H1 (cell line): ENCODE measurements at regions of chr2 and their contacts with region 1.

Region 1: GRCh38 chr2:41698678-41699422 is 349.0 kb upstream of the PKDCC start:
- DNase-seq: peak; percentile 21 to 83
- H3K4me3 ChIP-seq: no peak overlapping the region
- H3K27ac ChIP-seq: no peak overlapping the region
- H3K4me1 ChIP-seq: peaks cover 0 to 2% (median 0%) of the 10 kb centered on the region in 4 experiments; a peak in 1 of 7 replicates
- H3K27me3 ChIP-seq: no peaks in the 10 kb centered on the region
- CTCF ChIP-seq: peak; percentile 77 to 95 (median 89)
- EP300 ChIP-seq: no peak
- POLR2A ChIP-seq: no peak
- RAD21 ChIP-seq: peak; percentile 89 to 93

Region 2: DNA sequence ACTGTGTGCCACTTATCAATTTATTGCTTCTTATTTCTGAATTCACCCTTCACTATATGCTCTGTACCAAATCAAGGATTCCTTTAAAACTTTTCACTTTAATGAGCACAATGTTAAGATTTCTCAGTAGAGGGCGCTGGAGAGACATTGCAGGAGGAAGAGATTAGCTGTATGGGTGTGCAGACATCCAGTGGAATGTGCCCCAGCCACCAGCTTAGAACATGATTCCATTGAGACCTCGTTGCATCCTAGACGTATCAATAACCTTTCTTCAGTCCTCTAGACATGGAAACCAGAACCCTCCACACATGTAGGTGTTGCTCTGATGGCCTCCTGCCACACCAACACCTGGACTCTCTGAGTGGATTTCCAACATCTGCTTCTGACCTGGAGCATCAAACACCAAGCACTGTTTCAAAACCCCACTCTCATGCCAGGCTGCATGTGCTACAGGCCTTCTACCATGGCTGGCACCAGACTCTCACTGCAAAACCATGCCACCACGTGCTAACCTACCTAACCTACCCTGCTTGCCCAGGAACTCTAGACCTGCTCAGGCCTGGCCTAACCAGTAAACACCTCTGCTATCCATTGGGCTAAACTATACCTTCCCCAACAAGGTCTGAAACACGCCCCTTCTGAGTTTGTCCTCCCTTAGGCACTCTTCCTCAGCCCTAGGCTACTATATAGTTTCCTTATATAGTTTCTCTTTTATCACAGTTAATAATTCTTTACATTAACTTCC is 284.2 kb before region 1 on chr2:
- CTCF ChIA-PET with region 1: interaction called, 115 read pairs
- POLR2A ChIA-PET with region 1: no interaction called
- DNase-seq: peak; percentile 1 to 49
- H3K4me3 ChIP-seq: no peak overlapping the region
- H3K27ac ChIP-seq: no peak overlapping the region
- H3K4me1 ChIP-seq: no peaks in the 10 kb centered on the region; a peak in 1 of 7 replicates
- H3K27me3 ChIP-seq: peaks cover 0 to 1% (median 0%) of the 10 kb centered on the region in 4 experiments; a peak in 1 of 7 replicates
- CTCF ChIP-seq: peak; percentile 14 to 77 (median 67)
- EP300 ChIP-seq: no peak
- POLR2A ChIP-seq: no peak
- RAD21 ChIP-seq: peak; percentile 87 to 91

Region 3: GRCh38 chr2:41441627-41442357 is 257.1 kb before region 1 on chr2:
- CTCF ChIA-PET with region 1: interaction called, 26 read pairs
- POLR2A ChIA-PET with region 1: no interaction called
- DNase-seq: no peak
- H3K4me3 ChIP-seq: no peak overlapping the region
- H3K27ac ChIP-seq: no peak overlapping the region
- H3K4me1 ChIP-seq: no peaks in the 10 kb centered on the region
- H3K27me3 ChIP-seq: no peaks in the 10 kb centered on the region
- CTCF ChIP-seq: peak in 1 of 3 experiments; percentile 16; a peak in 1 of 4 replicates
- EP300 ChIP-seq: no peak
- POLR2A ChIP-seq: no peak
- RAD21 ChIP-seq: no peak

Region 4: DNA sequence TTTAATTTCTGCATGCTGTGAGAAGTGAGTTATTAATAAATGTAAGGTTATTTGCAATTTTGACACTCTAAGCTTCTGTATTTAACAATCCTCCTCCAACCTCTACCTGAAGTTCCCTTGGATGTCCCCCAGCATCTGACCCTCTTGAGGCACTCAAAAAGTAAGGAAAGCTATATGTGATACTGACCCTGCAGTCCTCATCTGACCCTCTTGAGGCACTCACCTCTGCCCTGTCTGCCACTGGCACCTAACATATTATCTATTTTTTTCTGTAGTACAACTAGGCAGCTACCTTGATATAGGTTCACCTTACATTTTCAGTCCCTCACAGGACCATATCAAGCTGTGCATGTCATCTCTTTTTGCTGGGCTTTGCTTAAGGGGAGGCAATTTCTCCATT is 234.5 kb before region 1 on chr2:
- CTCF ChIA-PET with region 1: interaction called, 10 read pairs
- POLR2A ChIA-PET with region 1: no interaction called
- DNase-seq: no peak
- H3K4me3 ChIP-seq: no peak overlapping the region
- H3K27ac ChIP-seq: no peak overlapping the region
- H3K4me1 ChIP-seq: no peaks in the 10 kb centered on the region
- H3K27me3 ChIP-seq: no peaks in the 10 kb centered on the region
- CTCF ChIP-seq: peak in 1 of 3 experiments; percentile 11; a peak in 2 of 4 replicates
- EP300 ChIP-seq: no peak
- POLR2A ChIP-seq: no peak
- RAD21 ChIP-seq: no peak

Region 5: GRCh38 chr2:41678639-41679038 is 20.2 kb before region 1 on chr2:
- CTCF ChIA-PET with region 1: no interaction called
- POLR2A ChIA-PET with region 1: no interaction called
- DNase-seq: no peak
- H3K4me3 ChIP-seq: no peak overlapping the region
- H3K27ac ChIP-seq: no peak overlapping the region
- H3K4me1 ChIP-seq: no peaks in the 10 kb centered on the region
- H3K27me3 ChIP-seq: no peaks in the 10 kb centered on the region
- CTCF ChIP-seq: no peak
- EP300 ChIP-seq: no peak
- POLR2A ChIP-seq: no peak
- RAD21 ChIP-seq: no peak

Region 6: DNA sequence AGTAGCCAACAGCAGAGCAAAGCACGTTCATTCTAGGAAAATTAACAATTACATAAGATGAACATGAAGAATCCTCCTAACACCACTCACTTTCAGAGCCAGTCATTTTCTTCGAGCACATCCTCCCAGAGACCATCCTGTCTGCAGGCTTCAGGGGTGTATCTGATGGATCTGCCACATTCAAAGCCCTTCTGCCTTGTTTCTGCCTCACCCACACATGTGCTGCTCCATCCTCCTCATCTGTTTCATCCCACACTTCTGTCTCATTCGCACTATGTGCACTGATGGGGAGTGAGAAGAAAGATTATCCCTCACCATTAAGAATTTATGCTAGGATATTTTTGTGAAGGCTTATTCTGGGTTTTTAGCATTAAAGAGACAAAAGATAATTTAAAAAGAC is 61.0 kb after region 1 on chr2:
- CTCF ChIA-PET with region 1: interaction called, 11 read pairs
- POLR2A ChIA-PET with region 1: no interaction called
- DNase-seq: no peak
- H3K4me3 ChIP-seq: no peak overlapping the region
- H3K27ac ChIP-seq: no peak overlapping the region
- H3K4me1 ChIP-seq: no peaks in the 10 kb centered on the region
- H3K27me3 ChIP-seq: no peaks in the 10 kb centered on the region
- CTCF ChIP-seq: no peak
- EP300 ChIP-seq: no peak
- POLR2A ChIP-seq: no peak
- RAD21 ChIP-seq: no peak